ENCODE measurements at regions of chr13 and their contacts with region 1.

Region 1: DNA sequence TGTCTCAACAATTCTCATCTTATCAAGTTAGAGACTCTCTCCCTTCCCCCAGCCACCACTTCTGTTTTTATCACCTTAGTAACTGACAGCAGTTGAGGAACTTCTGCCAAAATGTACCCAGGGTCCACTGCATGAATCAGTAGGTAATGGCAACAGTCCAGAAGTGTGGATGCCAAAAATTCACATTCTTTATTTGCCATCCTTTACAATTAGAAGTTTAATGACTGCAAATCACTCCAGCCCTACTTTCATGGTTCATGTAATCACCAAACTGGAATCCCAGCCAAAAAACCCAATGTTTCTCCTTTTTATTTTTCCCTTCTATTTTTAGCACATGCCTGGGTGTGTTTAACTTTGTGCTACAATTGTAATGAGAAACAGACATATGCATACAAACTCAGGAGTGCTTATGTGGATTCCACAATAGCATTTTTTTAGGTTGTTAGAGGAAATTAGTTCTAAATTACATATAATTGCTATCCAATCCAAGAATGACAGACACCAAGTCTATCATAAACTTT is 243.5 kb downstream of the RGCC start:
- DNase-seq: no peak

Region 2: DNA sequence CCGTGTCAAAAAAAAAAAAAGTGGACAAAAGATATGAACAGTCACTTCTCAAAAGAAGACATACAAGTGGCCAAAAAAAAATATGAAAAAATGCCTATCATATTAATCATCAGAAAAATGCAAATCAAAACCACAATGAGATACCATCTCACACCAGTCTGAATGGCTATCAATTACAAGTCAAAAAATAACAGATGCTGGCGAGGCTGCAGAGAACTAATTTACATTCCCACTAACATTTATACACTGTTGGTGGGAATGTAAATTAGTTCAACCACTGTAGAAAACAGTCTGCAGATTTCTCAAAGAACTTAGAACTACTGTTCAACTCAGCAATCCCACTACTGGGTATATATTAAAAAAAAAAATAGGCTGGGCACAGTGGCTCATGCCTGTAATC is 1007.9 kb before region 1 on chr13:
- intact Hi-C with region 1: no loop called
- DNase-seq: no peak

Region 3: DNA sequence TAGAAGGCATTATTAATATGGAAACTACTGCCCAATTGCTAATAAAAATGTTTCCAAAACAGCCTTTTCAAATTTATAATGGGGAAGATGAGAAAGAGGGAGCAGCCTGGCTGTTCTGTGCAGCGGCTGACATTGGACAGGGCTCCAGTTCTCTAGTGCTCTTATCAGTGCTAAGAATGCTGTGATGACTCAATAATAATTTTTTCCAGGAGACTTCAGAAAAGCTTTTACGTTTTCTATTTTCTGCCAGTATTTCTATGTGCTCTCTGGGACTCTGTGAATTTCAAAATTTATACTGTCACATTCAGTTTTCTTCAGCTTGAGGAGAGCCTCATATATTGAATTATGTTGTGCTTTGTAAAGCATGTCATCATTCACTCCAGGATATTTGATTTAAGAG is 50.4 kb after region 1 on chr13:
- intact Hi-C with region 1: loop called (anchors 5 kb)
- DNase-seq: no peak

Measured in cardiac septum (tissue), 1 donor.